ENCODE measurements at regions of chr16 and their contacts with region 1.

Region 1: DNA sequence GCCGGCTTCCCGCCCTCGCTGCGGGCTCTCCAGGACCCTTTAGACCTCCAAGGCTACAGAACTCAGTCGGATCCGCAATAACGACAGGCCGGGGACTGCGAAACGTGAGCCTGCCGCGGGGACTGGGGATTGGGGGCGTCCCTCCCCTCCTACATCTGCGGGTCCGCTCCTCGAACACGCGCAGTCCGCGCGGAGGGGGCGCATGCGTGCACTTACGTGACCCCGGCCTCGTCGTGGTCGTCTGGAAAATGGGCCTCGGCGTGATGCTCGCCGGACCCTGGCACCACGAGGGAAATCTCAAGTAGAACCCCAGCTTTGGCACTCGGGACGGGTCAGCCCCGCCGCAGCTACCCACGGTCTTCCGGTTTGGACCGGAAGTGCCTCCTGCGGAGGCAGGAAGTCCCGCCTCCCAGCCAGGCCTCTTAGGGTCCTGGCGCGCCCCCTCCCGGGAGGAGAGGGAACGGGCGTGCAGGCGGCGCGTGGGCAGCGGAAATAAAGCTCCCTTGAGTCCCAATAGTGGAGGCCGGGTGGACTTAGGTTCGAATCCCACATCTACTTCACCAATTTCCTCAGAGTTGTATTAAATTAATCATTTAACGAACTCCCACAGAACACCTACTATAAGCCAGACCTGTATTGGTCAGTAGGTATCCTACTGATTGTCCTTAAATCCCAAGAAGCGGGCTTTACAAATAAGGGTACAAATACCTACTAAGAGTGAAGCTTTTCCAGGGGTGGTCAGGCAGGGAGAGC is at the start of gene TAF1C:
- DNase-seq: peak; percentile 75 to 95 (median 88)
- ATAC-seq: peak; percentile 97
- H3K4me3 ChIP-seq: peak within 1 kb of the TSS; percentile 87 to 100
- H3K4me3 Mint-ChIP-seq: peak within 1 kb of the TSS; percentile 91
- H3K27ac ChIP-seq: peak within 1 kb of the TSS; percentile 71 to 77
- H3K27ac Mint-ChIP-seq: peak within 1 kb of the TSS; percentile 94
- H3K4me1 ChIP-seq: peaks cover 6% of the 10 kb centered on the region
- H3K4me1 Mint-ChIP-seq: peaks cover 20% of the 10 kb centered on the region
- H3K27me3 ChIP-seq: no peaks in the 10 kb centered on the region
- H3K27me3 Mint-ChIP-seq: no peaks in the 10 kb centered on the region
- CTCF ChIP-seq: peak; percentile 89
- total RNA-seq, gene TAF1C: 86.0 to 92.6 TPM

Region 2: GRCh38 chr16:83744441-83744981 is 442.4 kb before region 1 on chr16:
- CTCF ChIA-PET with region 1: no interaction called
- POLR2A ChIA-PET with region 1: no interaction called
- intact Hi-C with region 1: no loop called
- DNase-seq: peak in 1 of 9 experiments; percentile 33
- ATAC-seq: no peak
- H3K4me3 ChIP-seq: no peak overlapping the region
- H3K4me3 Mint-ChIP-seq: no peak overlapping the region
- H3K27ac ChIP-seq: no peak overlapping the region
- H3K27ac Mint-ChIP-seq: no peak overlapping the region
- H3K4me1 ChIP-seq: no peaks in the 10 kb centered on the region
- H3K4me1 Mint-ChIP-seq: no peaks in the 10 kb centered on the region
- H3K27me3 ChIP-seq: no peaks in the 10 kb centered on the region
- H3K27me3 Mint-ChIP-seq: peaks cover 20% of the 10 kb centered on the region
- CTCF ChIP-seq: no peak

Region 3: DNA sequence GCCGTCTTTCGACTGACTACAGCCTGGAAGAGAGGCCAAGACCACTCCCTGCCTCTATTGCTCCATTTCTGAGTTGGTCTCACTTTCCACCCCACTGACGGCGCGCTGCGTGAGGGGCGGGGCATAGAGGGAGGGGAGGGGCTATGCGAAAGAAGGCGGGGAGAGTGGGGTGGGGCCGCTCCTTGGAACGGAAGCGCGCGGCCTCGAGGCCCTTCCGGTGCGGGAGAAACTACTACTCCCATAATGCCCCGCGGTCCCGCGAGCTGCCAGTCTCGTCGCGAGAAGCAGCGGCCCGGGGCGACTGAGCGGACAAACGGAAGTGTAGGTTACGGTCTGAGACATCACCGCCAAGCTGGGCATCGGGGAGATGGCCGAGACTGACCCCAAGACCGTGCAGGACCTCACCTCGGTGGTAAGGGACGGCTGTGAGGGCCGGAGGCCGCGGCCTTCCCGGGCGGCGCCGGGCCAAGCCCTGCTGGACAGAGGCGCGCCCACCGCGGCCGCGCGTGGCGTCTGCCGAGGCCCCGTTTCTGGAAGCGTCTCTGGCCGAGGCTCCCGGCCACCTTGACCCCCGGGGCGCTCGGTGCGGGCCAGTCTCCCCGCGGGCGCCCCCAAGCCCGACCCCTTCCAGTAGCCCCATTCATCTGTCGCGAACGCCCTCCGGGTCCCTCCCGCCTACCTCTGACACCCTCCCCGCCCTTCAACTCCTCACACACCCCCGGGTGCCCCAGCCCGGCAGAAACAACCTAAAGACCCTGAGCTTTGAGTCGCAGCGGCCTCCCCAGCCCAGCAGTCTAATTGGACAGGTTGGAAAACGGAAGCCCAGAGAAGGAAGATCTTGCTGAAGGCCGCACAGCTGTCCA is 378.9 kb before region 1 on chr16 and contains the start of gene HSBP1:
- CTCF ChIA-PET with region 1: no interaction called
- POLR2A ChIA-PET with region 1: no interaction called
- intact Hi-C with region 1: loop called (anchors 2 kb)
- DNase-seq: peak; percentile 83 to 95 (median 92)
- ATAC-seq: peak; percentile 98
- H3K4me3 ChIP-seq: peak within 1 kb of the TSS; percentile 82 to 91
- H3K4me3 Mint-ChIP-seq: peak within 1 kb of the TSS; percentile 98
- H3K27ac ChIP-seq: peak within 1 kb of the TSS; percentile 70 to 85
- H3K27ac Mint-ChIP-seq: peak within 1 kb of the TSS; percentile 96
- H3K4me1 ChIP-seq: peaks cover 10% of the 10 kb centered on the region
- H3K4me1 Mint-ChIP-seq: peaks cover 36% of the 10 kb centered on the region
- H3K27me3 ChIP-seq: no peaks in the 10 kb centered on the region
- H3K27me3 Mint-ChIP-seq: no peaks in the 10 kb centered on the region
- CTCF ChIP-seq: no peak
- total RNA-seq, gene HSBP1: 17.5 to 24.1 TPM

Region 4: GRCh38 chr16:83898463-83899271 is 288.2 kb before region 1 on chr16 and contains the start of gene MLYCD:
- CTCF ChIA-PET with region 1: interaction called, 4 read pairs
- POLR2A ChIA-PET with region 1: no interaction called
- intact Hi-C with region 1: loop called (anchors 1 kb)
- DNase-seq: peak; percentile 39 to 86 (median 68)
- ATAC-seq: peak; percentile 90
- H3K4me3 ChIP-seq: peak within 1 kb of the TSS; percentile 73 to 76
- H3K4me3 Mint-ChIP-seq: peak within 1 kb of the TSS; percentile 96
- H3K27ac ChIP-seq: peak within 1 kb of the TSS; percentile 46 to 47
- H3K27ac Mint-ChIP-seq: peak within 1 kb of the TSS; percentile 90
- H3K4me1 ChIP-seq: peaks cover 25% of the 10 kb centered on the region
- H3K4me1 Mint-ChIP-seq: peaks cover 36% of the 10 kb centered on the region
- H3K27me3 ChIP-seq: no peaks in the 10 kb centered on the region
- H3K27me3 Mint-ChIP-seq: peaks cover 10% of the 10 kb centered on the region
- CTCF ChIP-seq: no peak
- total RNA-seq, gene MLYCD: 2.9 to 4.0 TPM

Region 5: GRCh38 chr16:84084570-84085270 is 102.1 kb before region 1 on chr16:
- CTCF ChIA-PET with region 1: interaction called, 21 read pairs
- POLR2A ChIA-PET with region 1: no interaction called
- intact Hi-C with region 1: loop called (anchors 1 kb)
- DNase-seq: peak; percentile 44 to 84 (median 71)
- ATAC-seq: peak; percentile 88
- H3K4me3 ChIP-seq: no peak overlapping the region
- H3K4me3 Mint-ChIP-seq: no peak overlapping the region
- H3K27ac ChIP-seq: no peak overlapping the region
- H3K27ac Mint-ChIP-seq: no peak overlapping the region
- H3K4me1 ChIP-seq: peaks cover 20% of the 10 kb centered on the region
- H3K4me1 Mint-ChIP-seq: peaks cover 32% of the 10 kb centered on the region
- H3K27me3 ChIP-seq: no peaks in the 10 kb centered on the region
- H3K27me3 Mint-ChIP-seq: no peaks in the 10 kb centered on the region
- CTCF ChIP-seq: peak; percentile 73

Region 6: GRCh38 chr16:84144859-84145639 is 41.8 kb before region 1 on chr16 and contains the starts of genes DNAAF1 and HSDL1:
- CTCF ChIA-PET with region 1: interaction called, 4 read pairs
- POLR2A ChIA-PET with region 1: no interaction called
- intact Hi-C with region 1: loop called (anchors 1 kb)
- DNase-seq: peak; percentile 91 to 98 (median 96)
- ATAC-seq: peak; percentile 81
- H3K4me3 ChIP-seq: peak within 1 kb of the TSS; percentile 70 to 90
- H3K4me3 Mint-ChIP-seq: peak within 1 kb of the TSS; percentile 93
- H3K27ac ChIP-seq: peak within 1 kb of the TSS; percentile 54 to 65
- H3K27ac Mint-ChIP-seq: peak within 1 kb of the TSS; percentile 88
- H3K4me1 ChIP-seq: peaks cover 11% of the 10 kb centered on the region
- H3K4me1 Mint-ChIP-seq: peaks cover 25% of the 10 kb centered on the region
- H3K27me3 ChIP-seq: no peaks in the 10 kb centered on the region
- H3K27me3 Mint-ChIP-seq: peaks cover 2% of the 10 kb centered on the region
- CTCF ChIP-seq: no peak
- total RNA-seq, gene DNAAF1: not detected
- total RNA-seq, gene HSDL1: 8.7 to 9.9 TPM

Region 7: DNA sequence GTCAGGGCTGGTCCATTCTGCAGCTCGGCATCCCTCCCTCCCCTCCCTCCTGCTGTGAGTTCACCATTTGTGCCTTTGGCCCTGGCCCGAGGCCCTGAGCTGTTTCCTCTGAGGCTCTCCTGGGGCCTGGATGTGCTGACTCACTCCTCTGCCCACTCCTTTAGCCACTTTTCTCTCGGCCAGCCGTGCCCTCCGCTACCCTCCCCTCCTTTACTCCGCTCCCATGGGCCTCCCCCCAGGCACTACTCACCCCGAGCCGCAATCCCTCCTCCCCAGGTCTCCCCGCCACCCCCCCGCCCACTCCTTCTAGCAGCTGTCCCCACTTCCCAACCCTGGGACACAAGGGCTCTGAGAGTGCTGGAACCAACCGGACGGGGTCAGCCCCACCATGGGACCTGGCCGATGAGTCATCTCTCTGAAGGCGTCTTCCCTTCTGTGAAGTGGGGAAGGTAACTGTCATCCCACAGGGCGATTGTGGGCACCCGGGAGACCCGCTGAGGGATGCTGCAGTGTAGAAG is 41.5 kb after region 1 on chr16:
- CTCF ChIA-PET with region 1: no interaction called
- POLR2A ChIA-PET with region 1: no interaction called
- intact Hi-C with region 1: no loop called
- DNase-seq: no peak
- ATAC-seq: no peak
- H3K4me3 ChIP-seq: no peak overlapping the region
- H3K4me3 Mint-ChIP-seq: no peak overlapping the region
- H3K27ac ChIP-seq: no peak overlapping the region
- H3K27ac Mint-ChIP-seq: no peak overlapping the region
- H3K4me1 ChIP-seq: no peaks in the 10 kb centered on the region
- H3K4me1 Mint-ChIP-seq: no peaks in the 10 kb centered on the region
- H3K27me3 ChIP-seq: no peaks in the 10 kb centered on the region
- H3K27me3 Mint-ChIP-seq: peaks cover 10% of the 10 kb centered on the region
- CTCF ChIP-seq: no peak

Region 8: DNA sequence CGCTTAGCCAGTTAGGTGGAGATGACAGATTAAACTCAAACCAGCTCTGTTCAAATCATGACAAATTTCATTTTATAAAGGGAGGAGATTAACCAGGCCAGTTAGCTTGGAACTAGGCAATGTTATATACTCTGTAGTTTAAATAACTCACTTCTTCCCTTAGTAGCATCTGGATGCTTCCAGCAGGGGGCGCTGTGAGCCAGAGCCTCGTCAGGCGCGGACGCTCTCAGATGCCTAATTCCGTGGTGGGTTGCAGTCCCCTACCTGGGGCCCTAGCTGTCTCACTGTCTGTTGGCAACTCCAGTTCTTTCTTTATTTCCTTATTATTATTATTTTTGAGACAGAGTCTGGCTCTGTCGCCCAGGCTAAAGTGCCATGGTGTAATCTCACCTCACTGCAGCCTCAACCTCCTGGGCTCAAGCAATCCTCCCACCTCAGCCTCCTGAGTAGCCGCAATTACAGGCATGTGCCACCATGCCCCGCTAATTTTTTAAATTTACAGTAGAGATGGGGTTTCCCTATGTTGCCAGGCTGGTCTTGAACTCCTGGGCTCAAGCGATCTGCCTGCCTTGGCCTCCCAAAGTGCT is 90.5 kb after region 1 on chr16:
- CTCF ChIA-PET with region 1: no interaction called
- POLR2A ChIA-PET with region 1: no interaction called
- intact Hi-C with region 1: no loop called
- DNase-seq: peak; percentile 43 to 80 (median 67)
- ATAC-seq: peak; percentile 62
- H3K4me3 ChIP-seq: no peak overlapping the region
- H3K4me3 Mint-ChIP-seq: no peak overlapping the region
- H3K27ac ChIP-seq: no peak overlapping the region
- H3K27ac Mint-ChIP-seq: no peak overlapping the region
- H3K4me1 ChIP-seq: no peaks in the 10 kb centered on the region
- H3K4me1 Mint-ChIP-seq: peaks cover 1% of the 10 kb centered on the region
- H3K27me3 ChIP-seq: no peaks in the 10 kb centered on the region
- H3K27me3 Mint-ChIP-seq: peaks cover 5% of the 10 kb centered on the region
- CTCF ChIP-seq: peak; percentile 82

Region 9: GRCh38 chr16:85688586-85689284 is 1501.9 kb after region 1 on chr16 and contains the start of gene GINS2:
- CTCF ChIA-PET with region 1: no interaction called
- POLR2A ChIA-PET with region 1: no interaction called
- intact Hi-C with region 1: loop called in 1 of 2 experiments (anchors 10 kb)
- DNase-seq: peak; percentile 84 to 95 (median 89)
- ATAC-seq: peak; percentile 100
- H3K4me3 ChIP-seq: peak within 1 kb of the TSS; percentile 51 to 88
- H3K4me3 Mint-ChIP-seq: peak within 1 kb of the TSS; percentile 75
- H3K27ac ChIP-seq: no peak within 1 kb of the TSS
- H3K27ac Mint-ChIP-seq: no peak within 1 kb of the TSS
- H3K4me1 ChIP-seq: peaks cover 7% of the 10 kb centered on the region
- H3K4me1 Mint-ChIP-seq: peaks cover 2% of the 10 kb centered on the region
- H3K27me3 ChIP-seq: no peaks in the 10 kb centered on the region
- H3K27me3 Mint-ChIP-seq: peaks cover 5% of the 10 kb centered on the region
- CTCF ChIP-seq: no peak
- total RNA-seq, gene GINS2: 0.58 to 1.0 TPM